PC-3 (cell line): ENCODE measurements at regions of chr2 and their contacts with region 1.

Region 1: DNA sequence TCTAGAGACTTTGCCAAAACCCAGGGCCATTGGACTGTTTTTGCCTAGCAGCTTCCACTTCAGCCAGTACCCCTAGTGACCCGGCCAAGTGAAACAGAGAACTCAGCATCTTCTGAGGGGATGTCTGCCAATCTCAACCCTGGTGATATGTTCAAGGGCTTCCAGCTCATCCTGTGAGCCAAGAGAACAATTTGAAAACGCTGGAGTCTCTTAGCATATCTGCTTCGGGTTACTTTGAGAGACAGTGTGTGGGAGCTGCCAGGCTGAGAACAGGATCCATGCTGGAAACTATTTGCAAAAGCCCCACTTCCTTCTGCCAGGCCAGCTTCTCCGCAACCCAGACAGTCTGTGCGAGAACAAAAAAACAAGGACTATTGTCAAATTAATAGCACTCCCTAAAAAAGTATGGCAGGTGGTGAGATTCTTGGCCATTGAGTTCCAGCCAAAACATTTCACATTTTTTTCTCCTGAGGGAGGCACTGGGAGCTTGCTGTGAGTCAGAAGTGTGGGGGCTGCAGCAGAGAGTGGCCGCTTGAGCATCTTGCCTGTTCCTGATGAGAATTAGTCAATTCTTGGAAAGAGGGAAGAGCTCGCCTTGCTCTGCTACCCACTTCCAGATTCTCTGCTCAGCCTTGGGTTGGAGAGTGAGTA is 395.6 kb upstream of the TRIB2 start:
- DNase-seq: peak; percentile 87
- ATAC-seq: peak; percentile 3; the same call in 1 of the 2 replicates
- H3K4me3 ChIP-seq: no peak overlapping the region
- H3K27ac ChIP-seq: peak overlapping the region; percentile 52
- H3K4me1 ChIP-seq: peaks cover 70% of the 10 kb centered on the region
- H3K27me3 ChIP-seq: no peaks in the 10 kb centered on the region
- CTCF ChIP-seq: peak; percentile 31; the same call in 1 of the 2 replicates

Region 2: GRCh38 chr2:11863513-11864328 is 457.4 kb before region 1 on chr2:
- CTCF ChIA-PET with region 1: no interaction called
- POLR2A ChIA-PET with region 1: no interaction called
- intact Hi-C with region 1: loop called (anchors 1 kb)
- DNase-seq: peak; percentile 93
- ATAC-seq: peak; percentile 96
- H3K4me3 ChIP-seq: no peak overlapping the region
- H3K27ac ChIP-seq: peak overlapping the region; percentile 44
- H3K4me1 ChIP-seq: peaks cover 10% of the 10 kb centered on the region
- H3K27me3 ChIP-seq: no peaks in the 10 kb centered on the region
- CTCF ChIP-seq: peak; percentile 94

Region 3: DNA sequence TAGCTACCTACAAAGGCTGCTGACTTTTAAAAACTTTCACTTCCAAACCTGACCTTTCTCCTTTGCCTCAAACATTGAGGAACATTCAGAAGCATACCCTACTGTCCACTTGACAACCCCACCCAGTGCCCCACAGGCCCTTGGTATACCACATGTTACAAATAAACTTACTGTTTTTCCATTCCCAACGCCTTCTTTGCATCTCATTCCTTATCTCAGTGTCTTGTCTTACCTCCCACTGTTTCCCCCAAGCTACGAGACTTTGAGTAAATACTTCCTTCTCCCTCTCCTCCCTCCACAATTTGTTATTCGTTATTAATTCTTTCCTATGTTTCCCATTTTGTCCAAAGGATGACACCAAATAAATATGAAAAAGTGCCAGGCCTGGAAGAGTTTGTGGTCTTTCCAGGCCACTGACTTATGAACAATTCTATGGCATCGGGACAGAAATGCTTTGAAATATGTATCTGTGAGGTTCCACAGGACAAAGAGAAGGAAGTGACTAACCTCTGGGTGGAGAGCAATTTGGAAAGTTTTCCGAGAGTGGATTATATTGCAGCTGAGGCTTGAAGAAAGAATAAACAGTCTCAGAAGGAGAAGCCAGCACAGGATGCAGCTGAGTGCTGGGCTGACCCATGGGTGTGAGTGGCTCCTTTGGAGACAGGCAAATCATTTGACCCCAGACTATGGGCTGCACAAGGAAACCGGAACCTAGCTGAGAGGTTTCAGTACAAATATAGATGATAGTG is 165.6 kb before region 1 on chr2:
- CTCF ChIA-PET with region 1: no interaction called
- POLR2A ChIA-PET with region 1: no interaction called
- intact Hi-C with region 1: loop called (anchors 1 kb)
- DNase-seq: peak; percentile 97
- ATAC-seq: peak; percentile 99
- H3K4me3 ChIP-seq: no peak overlapping the region
- H3K27ac ChIP-seq: peak overlapping the region; percentile 66
- H3K4me1 ChIP-seq: peaks cover 20% of the 10 kb centered on the region
- H3K27me3 ChIP-seq: no peaks in the 10 kb centered on the region
- CTCF ChIP-seq: no peak

Region 4: DNA sequence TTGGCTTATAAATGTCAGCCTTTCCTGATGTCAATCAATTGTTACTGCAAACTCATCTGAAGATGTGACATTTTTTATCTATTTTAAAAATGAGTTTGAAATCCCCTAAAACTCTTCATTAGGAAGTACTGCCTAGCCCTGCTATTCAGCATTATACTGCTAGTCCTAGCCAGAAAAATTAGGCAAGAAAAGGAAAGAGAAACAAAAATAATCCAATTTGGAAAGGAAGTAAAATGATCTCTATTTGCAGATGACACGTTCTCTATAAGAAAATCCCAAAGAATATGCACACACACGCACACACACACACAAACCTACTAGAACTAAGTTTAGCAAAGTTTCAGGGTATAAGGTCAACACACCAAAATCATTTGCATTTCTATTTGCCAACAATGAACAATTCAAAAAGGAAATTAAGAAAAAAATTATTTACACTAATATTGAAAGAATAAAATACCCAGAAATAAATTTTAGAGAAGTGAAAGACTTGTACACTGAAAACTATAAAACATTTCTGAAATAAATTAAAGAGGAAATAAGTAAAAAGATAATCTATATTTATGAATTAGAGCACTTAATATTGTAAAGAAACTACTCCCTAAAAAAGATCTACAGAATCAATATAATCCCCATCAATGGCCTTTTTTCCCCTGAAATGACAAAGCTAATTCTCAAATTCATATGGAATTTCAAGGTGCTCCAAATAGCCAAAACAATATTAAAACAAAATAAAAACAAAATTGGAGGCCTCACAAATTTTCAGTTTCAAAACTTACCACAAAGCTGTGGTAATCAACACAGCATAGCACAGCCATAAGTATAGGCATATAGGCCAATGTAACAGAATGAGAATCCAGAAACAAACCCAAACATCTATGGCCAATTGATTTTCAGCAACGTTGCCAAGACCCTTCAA is 38.1 kb before region 1 on chr2:
- CTCF ChIA-PET with region 1: no interaction called
- POLR2A ChIA-PET with region 1: no interaction called
- intact Hi-C with region 1: loop called (anchors 1 kb)
- DNase-seq: no peak
- ATAC-seq: no peak
- H3K4me3 ChIP-seq: no peak overlapping the region
- H3K27ac ChIP-seq: no peak overlapping the region
- H3K4me1 ChIP-seq: peaks cover 36% of the 10 kb centered on the region
- H3K27me3 ChIP-seq: no peaks in the 10 kb centered on the region
- CTCF ChIP-seq: no peak

Region 5: GRCh38 chr2:12534646-12535263 is 213.6 kb after region 1 on chr2:
- CTCF ChIA-PET with region 1: no interaction called
- POLR2A ChIA-PET with region 1: interaction called, 13 read pairs
- intact Hi-C with region 1: loop called (anchors 5 kb)
- DNase-seq: peak; percentile 96
- ATAC-seq: peak; percentile 90
- H3K4me3 ChIP-seq: no peak overlapping the region
- H3K27ac ChIP-seq: peak overlapping the region; percentile 81
- H3K4me1 ChIP-seq: peaks cover 33% of the 10 kb centered on the region
- H3K27me3 ChIP-seq: no peaks in the 10 kb centered on the region
- CTCF ChIP-seq: no peak

Region 6: DNA sequence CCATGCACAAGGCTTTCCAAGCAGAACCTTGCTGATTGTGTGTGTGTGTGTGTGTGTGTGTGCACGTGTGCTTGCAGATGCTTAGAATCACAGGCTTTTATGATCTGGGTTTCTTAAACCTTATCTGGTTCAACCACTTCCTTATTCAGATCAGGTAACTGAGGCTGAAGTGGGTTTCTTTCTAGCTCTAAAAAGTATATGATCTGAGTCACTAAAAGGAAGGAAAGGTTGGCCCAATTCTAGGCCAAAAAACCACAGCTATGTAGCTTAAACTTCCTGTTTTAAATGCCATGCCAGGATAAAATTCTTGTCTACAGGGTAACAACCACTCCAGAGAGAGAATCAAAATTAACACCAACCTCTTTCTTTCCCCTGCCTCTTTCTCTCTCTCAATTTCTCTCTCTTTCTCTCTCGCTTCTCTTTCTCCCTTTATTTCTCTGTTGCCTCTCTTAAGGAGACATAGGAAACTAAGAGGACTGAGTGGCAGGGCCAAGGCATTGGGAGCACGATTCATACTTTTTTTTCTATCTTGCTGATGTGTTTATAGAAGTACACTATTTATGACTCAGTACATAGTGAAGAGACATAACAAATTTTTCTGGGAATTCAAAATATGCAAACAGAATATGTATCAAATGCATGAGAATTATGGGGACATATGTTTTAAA is 536.0 kb after region 1 on chr2:
- CTCF ChIA-PET with region 1: no interaction called
- POLR2A ChIA-PET with region 1: no interaction called
- intact Hi-C with region 1: loop called (anchors 1 kb)
- DNase-seq: peak; percentile 92
- ATAC-seq: peak; percentile 69
- H3K4me3 ChIP-seq: peak overlapping the region; percentile 40
- H3K27ac ChIP-seq: peak overlapping the region; percentile 79
- H3K4me1 ChIP-seq: peaks cover 34% of the 10 kb centered on the region
- H3K27me3 ChIP-seq: no peaks in the 10 kb centered on the region
- CTCF ChIP-seq: no peak